ENCODE measurements at regions of chr3 and their contacts with region 1.

Region 1: DNA sequence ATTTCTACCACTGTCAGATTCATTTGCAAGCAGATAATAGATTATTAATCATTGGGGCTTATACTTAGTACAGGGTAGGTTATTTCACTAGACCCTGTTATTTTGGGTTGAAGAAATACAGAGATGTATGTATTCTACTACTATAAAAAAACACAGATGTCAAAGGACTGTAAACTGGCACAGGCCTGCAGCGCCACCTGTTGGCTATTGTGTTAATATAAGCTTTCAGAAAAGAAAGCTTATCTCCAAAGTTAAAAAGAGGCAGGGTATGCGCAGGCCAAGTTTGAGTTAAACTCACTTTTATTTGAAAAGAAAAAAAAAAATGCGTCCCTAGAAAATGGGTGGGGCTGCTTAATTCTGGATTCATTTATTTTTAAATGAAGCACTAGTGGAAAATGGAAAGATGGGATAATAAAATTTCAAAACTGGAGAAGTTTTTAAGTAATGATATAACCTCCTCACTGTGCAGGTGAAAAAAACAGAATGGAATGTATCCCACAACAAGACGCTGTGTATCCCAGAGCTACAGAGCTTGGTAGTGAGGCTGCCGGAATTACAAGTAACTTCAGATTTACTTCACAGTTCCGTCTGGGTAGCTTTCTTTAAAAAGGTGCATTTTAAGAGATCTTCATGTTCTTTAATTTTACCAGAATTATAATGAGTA is 407.2 kb upstream of the TGFBR2 start:
- DNase-seq: peak; percentile 15 to 58
- ATAC-seq: peak in 1 of 2 experiments; percentile 66; a peak in 2 of 6 replicates
- H3K4me3 ChIP-seq: no peak overlapping the region
- H3K27ac ChIP-seq: peak overlapping the region; percentile 4 to 59; a peak in 4 of 6 replicates
- H3K4me1 ChIP-seq: peaks cover 9% of the 10 kb centered on the region
- CTCF ChIP-seq: peak; percentile 74
- EP300 ChIP-seq: no peak
- POLR2A ChIP-seq: no peak
- RAD21 ChIP-seq: peak; percentile 80 to 82

Region 2: GRCh38 chr3:30112902-30113484 is 86.2 kb before region 1 on chr3:
- CTCF ChIA-PET with region 1: interaction called, 12 read pairs
- POLR2A ChIA-PET with region 1: no interaction called
- DNase-seq: peak; percentile 6 to 54
- ATAC-seq: peak; percentile 59 to 65; a peak in 3 of 6 replicates
- H3K4me3 ChIP-seq: no peak overlapping the region
- H3K27ac ChIP-seq: peak overlapping the region; percentile 54 to 71
- H3K4me1 ChIP-seq: peaks cover 9% of the 10 kb centered on the region; the same call in 1 of the 3 replicates
- CTCF ChIP-seq: peak; percentile 81
- EP300 ChIP-seq: no peak
- POLR2A ChIP-seq: no peak
- RAD21 ChIP-seq: peak; percentile 86 to 96

Region 3: DNA sequence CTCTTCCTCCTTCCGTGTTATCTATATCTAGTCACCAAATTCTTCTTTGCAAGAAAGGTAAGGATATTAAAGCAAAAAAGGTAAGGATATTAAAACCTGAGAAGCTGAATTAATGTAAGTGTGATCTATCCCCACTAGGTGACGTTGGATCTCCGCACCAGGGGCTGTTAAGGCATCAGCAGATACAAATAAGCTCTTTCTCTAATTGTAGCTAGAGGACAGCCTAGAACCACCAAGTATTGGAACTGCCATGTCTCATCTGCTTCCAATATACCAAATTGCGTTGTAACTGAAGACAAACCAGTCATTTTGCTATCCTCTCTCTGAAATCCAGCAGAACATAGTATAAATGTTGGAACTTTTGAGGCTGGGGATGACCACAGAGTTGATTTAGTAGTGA is 64.0 kb before region 1 on chr3:
- CTCF ChIA-PET with region 1: interaction called, 17 read pairs
- POLR2A ChIA-PET with region 1: no interaction called
- DNase-seq: peak; percentile 4 to 63
- ATAC-seq: peak; percentile 76 to 78; a peak in 5 of 6 replicates
- H3K4me3 ChIP-seq: no peak overlapping the region
- H3K27ac ChIP-seq: peak overlapping the region; percentile 42 to 48; a peak in 1 of 6 replicates
- H3K4me1 ChIP-seq: no peaks in the 10 kb centered on the region
- CTCF ChIP-seq: peak; percentile 66
- EP300 ChIP-seq: no peak
- POLR2A ChIP-seq: no peak
- RAD21 ChIP-seq: peak; percentile 85 to 86

Region 4: GRCh38 chr3:30260762-30261161 is 61.5 kb after region 1 on chr3:
- CTCF ChIA-PET with region 1: interaction called, 11 read pairs
- POLR2A ChIA-PET with region 1: no interaction called
- DNase-seq: no peak
- ATAC-seq: no peak
- H3K4me3 ChIP-seq: no peak overlapping the region
- H3K27ac ChIP-seq: peak overlapping the region; percentile 8 to 84; a peak in 5 of 6 replicates
- H3K4me1 ChIP-seq: peaks cover 35% of the 10 kb centered on the region
- CTCF ChIP-seq: no peak
- EP300 ChIP-seq: no peak
- POLR2A ChIP-seq: no peak
- RAD21 ChIP-seq: no peak